ENCODE measurements at regions of chr19 and their contacts with region 1.

Region 1: GRCh38 chr19:36528194-36528920 is at the start of gene ZNF260:
- DNase-seq: peak; percentile 81 to 94 (median 90)
- ATAC-seq: peak; percentile 95
- H3K4me3 ChIP-seq: peak within 1 kb of the TSS; percentile 91
- H3K4me3 Mint-ChIP-seq: peak within 1 kb of the TSS; percentile 88 to 100 (median 98)
- H3K27ac ChIP-seq: peak within 1 kb of the TSS; percentile 83
- H3K27ac Mint-ChIP-seq: peak within 1 kb of the TSS; percentile 84 to 99 (median 96)
- H3K4me1 ChIP-seq: peaks cover 4 to 11% of the 10 kb centered on the region in 2 donors
- H3K4me1 Mint-ChIP-seq: peaks cover 15 to 31% (median 23%) of the 10 kb centered on the region in 7 donors
- H3K27me3 ChIP-seq: no peaks in the 10 kb centered on the region
- H3K27me3 Mint-ChIP-seq: no peaks in the 10 kb centered on the region
- total RNA-seq, gene ZNF260: 2.9 to 13.2 (median 11.3) TPM

Region 2: GRCh38 chr19:36114763-36115452 is 413.4 kb before region 1 on chr19 and contains the start of gene POLR2I:
- CTCF ChIA-PET with region 1: no interaction called
- POLR2A ChIA-PET with region 1: no interaction called
- intact Hi-C with region 1: loop called in 1 of 2 experiments (anchors 1 kb)
- DNase-seq: peak; percentile 95 to 100 (median 99)
- ATAC-seq: peak; percentile 92
- H3K4me3 ChIP-seq: peak within 1 kb of the TSS; percentile 97
- H3K4me3 Mint-ChIP-seq: peak within 1 kb of the TSS; percentile 89 to 98 (median 96)
- H3K27ac ChIP-seq: peak within 1 kb of the TSS; percentile 90
- H3K27ac Mint-ChIP-seq: peak within 1 kb of the TSS; percentile 97 to 99 (median 98)
- H3K4me1 ChIP-seq: peaks cover 14 to 15% of the 10 kb centered on the region in 2 donors
- H3K4me1 Mint-ChIP-seq: peaks cover 27 to 54% (median 42%) of the 10 kb centered on the region in 7 donors
- H3K27me3 ChIP-seq: no peaks in the 10 kb centered on the region
- H3K27me3 Mint-ChIP-seq: peaks cover 0 to 5% (median 0%) of the 10 kb centered on the region in 5 donors
- total RNA-seq, gene POLR2I: 20.9 to 56.7 (median 44.7) TPM

Region 3: DNA sequence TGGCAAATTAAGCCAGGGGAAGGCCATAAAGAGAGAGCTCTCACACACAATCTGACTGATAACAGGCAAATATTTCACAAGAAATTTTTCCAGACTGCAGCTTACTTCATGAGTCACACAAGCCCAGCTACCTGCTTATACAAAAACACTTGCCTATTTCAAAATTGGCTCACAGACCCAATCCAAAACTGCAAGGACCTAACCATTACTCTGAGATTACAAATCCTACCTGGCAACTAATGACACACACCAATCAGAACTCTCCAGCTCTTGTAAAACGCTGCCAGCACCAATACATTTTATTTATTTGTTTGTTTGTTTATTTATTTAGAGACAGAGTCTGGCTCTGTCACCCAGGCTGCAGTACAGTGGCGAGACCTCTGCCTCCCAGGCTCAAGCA is 91.8 kb before region 1 on chr19:
- CTCF ChIA-PET with region 1: no interaction called
- POLR2A ChIA-PET with region 1: no interaction called
- intact Hi-C with region 1: no loop called
- DNase-seq: no peak
- ATAC-seq: no peak
- H3K4me3 ChIP-seq: no peak overlapping the region
- H3K4me3 Mint-ChIP-seq: no peak overlapping the region
- H3K27ac ChIP-seq: no peak overlapping the region
- H3K27ac Mint-ChIP-seq: no peak overlapping the region
- H3K4me1 ChIP-seq: no peaks in the 10 kb centered on the region
- H3K4me1 Mint-ChIP-seq: no peaks in the 10 kb centered on the region
- H3K27me3 ChIP-seq: no peaks in the 10 kb centered on the region
- H3K27me3 Mint-ChIP-seq: peaks cover 0 to 4% (median 0%) of the 10 kb centered on the region in 5 donors

Region 4: DNA sequence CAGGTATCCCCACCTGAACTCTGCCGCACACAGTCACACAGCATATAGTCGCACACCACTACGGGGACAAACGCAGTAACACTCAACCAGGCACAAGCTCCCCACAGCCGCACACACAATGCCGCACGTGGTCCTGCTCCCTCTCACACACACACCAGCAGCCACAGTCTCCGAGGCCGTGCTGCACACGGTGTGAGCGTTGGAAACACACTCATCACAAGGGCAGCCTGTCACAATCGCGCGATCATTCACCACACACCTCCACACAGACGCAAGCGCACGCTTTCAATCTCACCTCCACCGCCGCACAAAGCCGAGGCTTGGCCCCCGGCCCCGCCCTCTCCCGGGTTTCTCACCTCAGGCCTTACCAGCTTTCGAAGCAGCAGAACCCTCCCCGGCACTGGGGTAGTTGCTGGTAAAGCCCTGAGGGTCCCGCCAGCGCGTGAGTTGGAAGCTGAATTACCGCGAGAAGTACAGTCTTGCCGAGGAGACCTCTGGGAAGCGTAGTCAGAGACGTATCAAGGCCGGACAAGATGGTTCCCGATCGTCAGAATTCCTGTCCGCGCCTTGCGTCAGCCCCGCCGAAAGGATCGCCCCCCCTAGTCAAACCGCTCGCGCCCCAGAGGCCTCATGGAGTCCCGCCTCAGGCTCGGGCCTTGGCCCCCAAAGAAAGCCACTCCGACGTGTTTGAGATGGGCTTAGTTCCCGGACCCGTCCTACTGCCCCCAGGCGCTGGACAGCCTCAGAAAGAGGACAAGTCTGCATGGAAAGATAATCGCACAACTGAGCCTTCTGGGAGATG is 39.0 kb before region 1 on chr19 and contains the start of gene ZNF566:
- CTCF ChIA-PET with region 1: no interaction called
- POLR2A ChIA-PET with region 1: interaction called, 26 read pairs
- intact Hi-C with region 1: loop called (anchors 1 kb)
- DNase-seq: peak; percentile 74 to 98 (median 94)
- ATAC-seq: peak; percentile 95
- H3K4me3 ChIP-seq: peak within 1 kb of the TSS; percentile 97
- H3K4me3 Mint-ChIP-seq: peak within 1 kb of the TSS; percentile 93 to 99 (median 98)
- H3K27ac ChIP-seq: peak within 1 kb of the TSS; percentile 90
- H3K27ac Mint-ChIP-seq: peak within 1 kb of the TSS; percentile 93 to 99 (median 98)
- H3K4me1 ChIP-seq: peaks cover 9 to 10% of the 10 kb centered on the region in 2 donors
- H3K4me1 Mint-ChIP-seq: peaks cover 22 to 43% (median 30%) of the 10 kb centered on the region in 7 donors
- H3K27me3 ChIP-seq: no peaks in the 10 kb centered on the region
- H3K27me3 Mint-ChIP-seq: no peaks in the 10 kb centered on the region
- total RNA-seq, gene ZNF566: 9.2 to 29.8 (median 9.3) TPM

Region 5: GRCh38 chr19:36665832-36666231 is 137.5 kb after region 1 on chr19:
- CTCF ChIA-PET with region 1: no interaction called
- POLR2A ChIA-PET with region 1: no interaction called
- intact Hi-C with region 1: loop called (anchors 1 kb)
- DNase-seq: peak in 1 of 9 donors; percentile 2
- ATAC-seq: no peak
- H3K4me3 ChIP-seq: peak overlapping the region; percentile 88
- H3K4me3 Mint-ChIP-seq: peak overlapping the region; percentile 91 to 100 (median 98)
- H3K27ac ChIP-seq: no peak overlapping the region
- H3K27ac Mint-ChIP-seq: peak overlapping the region; percentile 29 to 99 (median 93)
- H3K4me1 ChIP-seq: peaks cover 0 to 10% of the 10 kb centered on the region in 2 donors
- H3K4me1 Mint-ChIP-seq: peaks cover 17 to 42% (median 35%) of the 10 kb centered on the region in 7 donors
- H3K27me3 ChIP-seq: no peaks in the 10 kb centered on the region
- H3K27me3 Mint-ChIP-seq: no peaks in the 10 kb centered on the region

Region 6: DNA sequence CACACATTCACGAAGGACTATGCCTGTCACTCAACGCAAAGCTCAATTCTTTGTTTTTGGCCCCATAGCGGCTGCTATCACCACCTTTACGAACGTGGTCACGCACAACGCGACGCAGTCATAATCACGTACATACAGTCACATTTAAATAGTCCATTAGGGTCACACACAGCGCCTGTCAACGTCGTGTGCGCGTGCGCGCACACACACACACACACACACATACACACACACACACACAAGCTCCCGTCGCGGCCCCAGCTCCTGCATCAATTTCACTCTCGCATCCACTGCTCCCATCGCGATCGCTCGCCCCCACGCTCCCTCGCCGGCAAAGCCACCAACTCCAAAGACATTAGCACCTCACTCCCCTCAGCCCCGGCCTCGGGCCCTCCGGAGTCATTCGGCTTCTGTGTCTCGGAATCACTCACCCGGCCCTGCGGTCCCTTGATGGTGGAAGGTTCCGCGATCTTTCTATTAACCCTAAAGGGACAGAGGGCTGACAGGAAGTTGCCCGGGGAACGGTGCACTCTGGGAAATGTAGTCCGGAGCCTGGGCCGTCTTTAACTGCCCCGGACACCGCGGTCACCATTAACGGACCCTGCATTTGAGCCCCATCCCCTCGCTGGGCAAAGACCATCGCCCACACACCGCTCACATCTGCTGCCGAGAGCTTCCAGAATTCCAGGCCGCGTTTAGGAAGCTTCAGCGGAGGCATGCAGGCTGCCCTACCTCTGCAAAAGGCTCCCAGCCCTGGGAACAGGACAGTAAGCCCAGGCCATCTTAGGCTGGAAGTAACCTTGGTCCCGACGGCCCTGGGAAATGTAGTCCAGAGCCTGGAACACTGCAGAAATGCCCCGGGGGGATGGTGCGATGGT is 309.8 kb after region 1 on chr19 and contains the start of gene ZNF790:
- CTCF ChIA-PET with region 1: no interaction called
- POLR2A ChIA-PET with region 1: no interaction called
- intact Hi-C with region 1: loop called (anchors 1 kb)
- DNase-seq: peak; percentile 68 to 91 (median 85)
- ATAC-seq: peak; percentile 95
- H3K4me3 ChIP-seq: peak within 1 kb of the TSS; percentile 92
- H3K4me3 Mint-ChIP-seq: peak within 1 kb of the TSS in 1 of 10 donors; percentile 22
- H3K27ac ChIP-seq: peak within 1 kb of the TSS; percentile 92
- H3K27ac Mint-ChIP-seq: peak within 1 kb of the TSS in 5 of 9 donors; percentile 39 to 65 (median 51)
- H3K4me1 ChIP-seq: peaks cover 6 to 11% of the 10 kb centered on the region in 2 donors
- H3K4me1 Mint-ChIP-seq: peaks cover 0 to 21% (median 14%) of the 10 kb centered on the region in 7 donors
- H3K27me3 ChIP-seq: no peaks in the 10 kb centered on the region
- H3K27me3 Mint-ChIP-seq: no peaks in the 10 kb centered on the region
- total RNA-seq, gene ZNF790: 2.6 to 14.4 (median 7.3) TPM

Region 7: DNA sequence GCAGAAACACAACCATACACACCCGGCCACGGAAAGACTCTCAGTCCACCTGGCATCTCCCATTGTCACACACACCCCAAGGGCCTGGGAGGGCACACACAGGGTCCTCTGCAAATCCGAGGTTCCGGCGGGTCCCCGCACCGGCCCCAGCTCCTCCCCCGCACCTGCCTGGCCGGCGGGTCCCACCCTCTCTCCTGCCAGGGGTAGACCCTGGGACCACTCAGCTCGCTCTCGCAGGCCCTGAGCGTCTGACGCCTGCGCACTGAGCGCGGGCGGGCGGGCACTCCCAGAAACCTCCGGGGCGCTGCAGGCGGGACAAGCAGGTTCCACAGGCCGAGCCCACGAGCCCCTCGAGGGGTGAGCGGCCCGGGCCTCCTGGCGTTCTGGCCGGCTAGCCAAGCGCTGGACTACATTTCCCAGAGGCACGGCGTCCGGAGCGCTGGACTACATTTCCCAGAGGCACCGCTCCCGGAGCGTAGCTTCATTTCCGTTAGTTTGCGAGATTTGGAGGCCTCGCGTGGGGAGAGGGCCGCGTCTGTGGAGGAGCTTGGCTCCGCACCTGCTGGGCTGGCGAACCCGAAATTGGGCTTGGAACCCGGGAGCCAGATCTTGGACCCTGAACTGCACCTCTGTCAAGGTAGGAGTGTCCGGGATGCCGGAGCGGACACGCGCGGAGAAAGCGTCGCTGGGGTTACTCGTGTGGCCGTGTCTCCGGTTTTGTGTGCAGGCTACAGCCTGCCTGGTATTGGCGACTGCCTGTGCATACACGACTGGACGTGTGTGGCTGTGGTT is 549.8 kb after region 1 on chr19 and contains the start of gene ZNF420:
- CTCF ChIA-PET with region 1: no interaction called
- POLR2A ChIA-PET with region 1: no interaction called
- intact Hi-C with region 1: loop called (anchors 1 to 2 kb)
- DNase-seq: peak; percentile 64 to 89 (median 84)
- ATAC-seq: peak; percentile 98
- H3K4me3 ChIP-seq: peak within 1 kb of the TSS; percentile 92
- H3K4me3 Mint-ChIP-seq: peak within 1 kb of the TSS; percentile 90 to 100 (median 96)
- H3K27ac ChIP-seq: peak within 1 kb of the TSS; percentile 82
- H3K27ac Mint-ChIP-seq: peak within 1 kb of the TSS; percentile 70 to 99 (median 94)
- H3K4me1 ChIP-seq: peaks cover 11 to 19% of the 10 kb centered on the region in 2 donors
- H3K4me1 Mint-ChIP-seq: peaks cover 16 to 43% (median 34%) of the 10 kb centered on the region in 7 donors
- H3K27me3 ChIP-seq: no peaks in the 10 kb centered on the region
- H3K27me3 Mint-ChIP-seq: no peaks in the 10 kb centered on the region
- total RNA-seq, gene ZNF420: 10.8 to 34.9 (median 15.9) TPM

Region 8: GRCh38 chr19:37594304-37594981 is 1066.1 kb after region 1 on chr19 and contains the starts of genes ZNF540 and ZNF571:
- CTCF ChIA-PET with region 1: no interaction called
- POLR2A ChIA-PET with region 1: interaction called, 3 read pairs
- intact Hi-C with region 1: loop called in 1 of 2 experiments (anchors 1 kb)
- DNase-seq: peak; percentile 70 to 95 (median 92)
- ATAC-seq: peak; percentile 96
- H3K4me3 ChIP-seq: peak within 1 kb of the TSS; percentile 80
- H3K4me3 Mint-ChIP-seq: peak within 1 kb of the TSS; percentile 94 to 100 (median 98)
- H3K27ac ChIP-seq: peak within 1 kb of the TSS; percentile 93
- H3K27ac Mint-ChIP-seq: peak within 1 kb of the TSS; percentile 93 to 100 (median 99)
- H3K4me1 ChIP-seq: peaks cover 7 to 18% of the 10 kb centered on the region in 2 donors
- H3K4me1 Mint-ChIP-seq: peaks cover 13 to 56% (median 39%) of the 10 kb centered on the region in 7 donors
- H3K27me3 ChIP-seq: no peaks in the 10 kb centered on the region
- H3K27me3 Mint-ChIP-seq: no peaks in the 10 kb centered on the region
- total RNA-seq, gene ZNF540: 0.99 to 22.7 (median 17.6) TPM
- total RNA-seq, gene ZNF571: 1.5 to 12.4 (median 9.0) TPM

Measured in naive thymus-derived CD4-positive, alpha-beta T cell (primary cell).